Activated T-helper 1 cell treated with anti-CD3 and anti-CD28 coated beads, Interleukin-12 subunit alpha, Interleukin-12 subunit beta, Interleukin-2, Interleukin-4 antibody, amounts not matched to agents 30 ng/mL and 10 ng/mL and 1 ng/mL, durations not matched to agents 14 hours and 24 hours and 36 hours (primary cell): ENCODE measurements at regions of chr9 and their contacts with region 1.

Region 1: GRCh38 chr9:121059998-121060636 is 10.0 kb upstream of the C5 start:
- DNase-seq: no peak
- H3K4me3 Mint-ChIP-seq: no peak overlapping the region
- H3K27ac Mint-ChIP-seq: no peak overlapping the region
- H3K4me1 Mint-ChIP-seq: peaks cover 15% of the 10 kb centered on the region
- H3K27me3 Mint-ChIP-seq: peaks cover 11% of the 10 kb centered on the region

Region 2: DNA sequence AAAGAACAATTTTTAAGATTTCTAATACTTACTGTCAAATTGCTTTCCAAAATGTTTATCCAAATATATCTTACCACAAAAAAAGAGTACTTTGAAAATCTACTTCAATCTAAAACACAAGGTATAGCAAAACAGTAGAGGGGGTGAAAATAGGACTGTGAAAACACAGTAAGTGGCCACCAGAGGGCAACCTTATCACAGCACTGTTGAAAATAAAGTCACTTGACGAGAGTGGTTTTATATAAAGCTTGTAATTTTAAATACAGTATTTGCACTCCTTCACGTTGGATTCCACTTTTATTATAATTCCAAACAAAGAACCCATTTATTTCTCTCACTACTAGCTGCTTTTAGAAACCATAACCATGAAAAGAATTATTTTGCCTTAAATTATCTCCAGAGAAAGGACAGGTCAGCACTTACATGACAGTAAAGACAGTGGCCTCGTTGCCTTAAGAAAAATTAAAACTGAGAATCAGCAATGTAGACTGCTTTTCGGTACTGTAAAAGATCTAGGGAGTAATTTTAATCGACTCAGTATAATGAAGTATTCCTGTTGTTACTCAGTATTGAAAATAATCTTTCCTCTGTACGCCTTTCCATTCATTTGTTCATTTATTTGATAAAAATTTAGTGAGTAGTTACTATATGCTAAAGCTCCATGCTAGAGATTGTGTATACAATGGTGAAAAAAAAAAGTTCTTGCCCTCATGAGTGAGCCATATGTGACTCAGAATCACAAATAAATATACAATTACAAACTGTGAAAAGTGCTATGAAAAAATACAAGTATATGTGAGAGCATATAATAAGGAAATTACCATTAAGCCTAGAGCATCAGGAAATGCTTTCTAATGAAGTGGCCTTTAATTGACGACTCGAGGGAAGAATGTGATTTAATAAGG is 440.1 kb before region 1 on chr9:
- intact Hi-C with region 1: loop called (anchors 2 kb)
- DNase-seq: peak; percentile 29
- H3K4me3 Mint-ChIP-seq: no peak overlapping the region
- H3K27ac Mint-ChIP-seq: no peak overlapping the region
- H3K4me1 Mint-ChIP-seq: peaks cover under 1% of the 10 kb centered on the region
- H3K27me3 Mint-ChIP-seq: no peaks in the 10 kb centered on the region

Region 3: GRCh38 chr9:120676767-120677402 is 383.2 kb before region 1 on chr9:
- intact Hi-C with region 1: no loop called
- DNase-seq: no peak
- H3K4me3 Mint-ChIP-seq: no peak overlapping the region
- H3K27ac Mint-ChIP-seq: no peak overlapping the region
- H3K4me1 Mint-ChIP-seq: no peaks in the 10 kb centered on the region
- H3K27me3 Mint-ChIP-seq: no peaks in the 10 kb centered on the region

Region 4: DNA sequence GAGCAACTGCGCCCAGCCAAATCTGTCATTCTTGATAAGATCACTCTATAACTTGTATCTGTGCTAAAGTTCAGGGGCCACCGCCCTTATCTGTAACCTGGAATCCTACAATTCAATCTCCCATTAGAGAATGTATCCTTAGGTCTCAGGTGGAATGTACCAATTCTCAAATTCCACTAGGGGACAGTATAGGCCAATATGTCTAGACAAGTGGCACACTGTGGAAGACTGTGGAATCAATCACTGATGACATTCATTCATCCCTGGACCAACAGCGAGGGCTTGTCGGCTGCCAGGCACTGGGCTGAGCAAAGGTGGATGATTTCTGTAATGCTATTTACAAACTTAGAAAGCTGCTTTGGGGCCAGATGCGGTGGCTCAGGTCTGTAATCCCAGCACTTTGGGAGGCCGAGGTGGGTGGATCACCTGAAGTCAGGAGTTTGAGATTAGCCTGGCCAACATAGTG is 317.1 kb before region 1 on chr9:
- intact Hi-C with region 1: loop called (anchors 1 kb)
- DNase-seq: no peak
- H3K4me3 Mint-ChIP-seq: no peak overlapping the region
- H3K27ac Mint-ChIP-seq: no peak overlapping the region
- H3K4me1 Mint-ChIP-seq: no peaks in the 10 kb centered on the region
- H3K27me3 Mint-ChIP-seq: peaks cover 8% of the 10 kb centered on the region

Region 5: GRCh38 chr9:120980951-120981350 is 79.2 kb before region 1 on chr9:
- intact Hi-C with region 1: loop called (anchors 1 kb)
- DNase-seq: no peak
- H3K4me3 Mint-ChIP-seq: no peak overlapping the region
- H3K27ac Mint-ChIP-seq: no peak overlapping the region
- H3K4me1 Mint-ChIP-seq: peaks cover under 1% of the 10 kb centered on the region
- H3K27me3 Mint-ChIP-seq: peaks cover 18% of the 10 kb centered on the region

Region 6: GRCh38 chr9:121650217-121651007 is 590.3 kb after region 1 on chr9:
- intact Hi-C with region 1: no loop called
- DNase-seq: no peak
- H3K4me3 Mint-ChIP-seq: no peak overlapping the region
- H3K27ac Mint-ChIP-seq: no peak overlapping the region
- H3K4me1 Mint-ChIP-seq: peaks cover 6% of the 10 kb centered on the region
- H3K27me3 Mint-ChIP-seq: peaks cover 58% of the 10 kb centered on the region